ENCODE measurements at regions of chr16 and their contacts with region 1.

Region 1: DNA sequence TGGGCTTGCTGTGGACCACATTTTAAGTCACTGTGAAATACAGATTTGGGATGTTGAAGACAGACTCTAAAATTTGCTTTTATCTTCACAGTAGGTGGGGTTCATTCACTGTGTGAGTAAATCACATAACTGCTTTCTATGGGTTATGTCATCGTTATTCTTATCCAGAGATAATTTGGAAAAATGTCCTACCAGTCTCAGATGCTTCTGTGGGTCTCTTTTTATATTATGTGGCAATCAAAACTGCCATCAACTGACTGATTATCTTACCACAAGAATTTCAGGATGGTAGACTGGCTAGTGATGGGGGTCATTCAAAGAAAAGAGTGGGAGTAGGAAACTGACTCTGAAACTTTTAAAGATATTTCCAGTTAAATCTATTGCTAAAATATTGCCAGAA is 3.1 kb downstream of the HSBP1 start:
- DNase-seq: no peak
- ATAC-seq: no peak
- H3K4me3 ChIP-seq: no peak overlapping the region
- H3K27ac ChIP-seq: peak overlapping the region; percentile 25
- H3K4me1 ChIP-seq: peaks cover 19% of the 10 kb centered on the region
- H3K27me3 ChIP-seq: no peaks in the 10 kb centered on the region
- CTCF ChIP-seq: no peak

Region 2: GRCh38 chr16:83851473-83851872 is 40.6 kb after region 1 on chr16:
- CTCF ChIA-PET with region 1: no interaction called
- POLR2A ChIA-PET with region 1: no interaction called
- intact Hi-C with region 1: no loop called
- DNase-seq: no peak
- ATAC-seq: no peak
- H3K4me3 ChIP-seq: no peak overlapping the region
- H3K27ac ChIP-seq: no peak overlapping the region
- H3K4me1 ChIP-seq: no peaks in the 10 kb centered on the region
- H3K27me3 ChIP-seq: peaks cover 62% of the 10 kb centered on the region
- CTCF ChIP-seq: no peak

Region 3: GRCh38 chr16:83898463-83899271 is 87.8 kb after region 1 on chr16 and contains the start of gene MLYCD:
- CTCF ChIA-PET with region 1: no interaction called
- POLR2A ChIA-PET with region 1: no interaction called
- intact Hi-C with region 1: no loop called
- DNase-seq: peak; percentile 67
- ATAC-seq: peak; percentile 93
- H3K4me3 ChIP-seq: peak within 1 kb of the TSS; percentile 69
- H3K27ac ChIP-seq: no peak within 1 kb of the TSS
- H3K4me1 ChIP-seq: peaks cover 7% of the 10 kb centered on the region
- H3K27me3 ChIP-seq: no peaks in the 10 kb centered on the region
- CTCF ChIP-seq: no peak
- total RNA-seq, gene MLYCD: 0.95 and 1.2 TPM in 2 replicates

Region 4: GRCh38 chr16:84013787-84014569 is 203.1 kb after region 1 on chr16:
- CTCF ChIA-PET with region 1: no interaction called
- POLR2A ChIA-PET with region 1: interaction called, 11 read pairs
- intact Hi-C with region 1: no loop called
- DNase-seq: peak; percentile 97
- ATAC-seq: peak; percentile 90
- H3K4me3 ChIP-seq: no peak overlapping the region
- H3K27ac ChIP-seq: no peak overlapping the region
- H3K4me1 ChIP-seq: peaks cover 4% of the 10 kb centered on the region; the same call in 1 of the 2 replicates
- H3K27me3 ChIP-seq: no peaks in the 10 kb centered on the region
- CTCF ChIP-seq: no peak

Measured in PC-3 (cell line).